ENCODE measurements at regions of chr11 and their contacts with region 1.

Region 1: DNA sequence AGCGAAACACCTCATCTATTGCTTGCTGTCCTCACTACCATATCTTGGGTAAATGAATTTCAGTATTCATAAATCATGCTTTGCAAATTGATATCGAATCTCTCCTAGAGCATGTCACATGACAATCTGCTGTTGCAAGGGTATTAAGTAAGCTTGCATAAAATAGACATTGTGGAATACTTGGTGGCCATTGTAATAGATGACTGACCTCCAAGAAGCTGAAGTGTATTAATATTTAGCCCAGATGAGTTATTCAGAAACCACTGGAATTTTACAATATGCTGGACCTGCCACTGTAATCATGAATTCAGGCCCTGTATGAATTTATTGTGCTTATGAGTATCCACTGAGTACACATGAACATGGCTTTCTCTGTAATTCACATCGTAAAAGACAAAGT is 289.7 kb upstream of the ARHGAP42 start:
- DNase-seq: no peak
- H3K4me3 ChIP-seq: no peak overlapping the region
- H3K27ac ChIP-seq: no peak overlapping the region
- H3K4me1 ChIP-seq: no peaks in the 10 kb centered on the region
- H3K27me3 ChIP-seq: no peaks in the 10 kb centered on the region
- CTCF ChIP-seq: no peak
- EP300 ChIP-seq: no peak
- POLR2A ChIP-seq: no peak

Region 2: GRCh38 chr11:100328658-100329315 is 68.6 kb before region 1 on chr11:
- intact Hi-C with region 1: no loop called
- DNase-seq: no peak
- H3K4me3 ChIP-seq: no peak overlapping the region
- H3K27ac ChIP-seq: no peak overlapping the region
- H3K4me1 ChIP-seq: no peaks in the 10 kb centered on the region
- H3K27me3 ChIP-seq: no peaks in the 10 kb centered on the region
- CTCF ChIP-seq: no peak
- EP300 ChIP-seq: no peak
- POLR2A ChIP-seq: no peak

Region 3: GRCh38 chr11:100340416-100341323 is 56.7 kb before region 1 on chr11:
- intact Hi-C with region 1: loop called (anchors 10 kb)
- DNase-seq: no peak
- H3K4me3 ChIP-seq: no peak overlapping the region
- H3K27ac ChIP-seq: no peak overlapping the region
- H3K4me1 ChIP-seq: peaks cover 0 to 11% (median 0%) of the 10 kb centered on the region in 4 donors
- H3K27me3 ChIP-seq: no peaks in the 10 kb centered on the region
- CTCF ChIP-seq: no peak
- EP300 ChIP-seq: no peak
- POLR2A ChIP-seq: no peak